Caco-2 (cell line): ENCODE measurements at regions of chr2 and their contacts with region 1.

Region 1: DNA sequence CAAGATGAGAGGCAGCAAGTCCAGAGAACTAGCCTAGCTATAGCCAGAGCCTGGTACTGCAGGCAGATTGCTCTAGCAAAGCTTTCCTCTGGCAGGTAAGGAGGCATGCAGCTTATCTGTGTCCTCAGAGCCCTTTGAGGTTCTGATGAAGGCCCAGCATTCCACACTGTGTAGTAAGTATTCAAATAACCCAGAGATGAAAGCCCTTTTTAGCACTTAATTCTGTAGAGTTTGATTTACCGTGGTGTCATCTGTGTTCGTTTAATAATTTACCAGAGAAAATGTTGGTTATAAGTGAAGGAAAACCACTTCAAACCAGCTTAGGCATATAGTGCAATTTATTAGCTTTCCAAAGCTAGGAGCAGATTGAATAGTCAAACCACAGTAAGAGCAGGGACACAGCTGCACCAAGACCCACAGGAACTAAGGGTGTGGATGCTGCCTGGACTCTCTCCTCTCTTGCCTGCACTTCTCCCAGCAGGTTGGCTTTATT is 226.6 kb downstream of the BABAM2 start:
- DNase-seq: peak; percentile 87 to 94
- H3K4me3 ChIP-seq: peak overlapping the region; percentile 29
- H3K4me3 Mint-ChIP-seq: peak overlapping the region; percentile 76
- H3K27ac Mint-ChIP-seq: peak overlapping the region; percentile 90
- H3K4me1 ChIP-seq: peaks cover 44% of the 10 kb centered on the region
- H3K4me1 Mint-ChIP-seq: peaks cover 40% of the 10 kb centered on the region
- H3K27me3 ChIP-seq: no peaks in the 10 kb centered on the region
- H3K27me3 Mint-ChIP-seq: no peaks in the 10 kb centered on the region
- CTCF ChIP-seq: peak in 1 of 2 experiments; percentile 3

Region 2: GRCh38 chr2:27765621-27766269 is 351.4 kb before region 1 on chr2:
- CTCF ChIA-PET with region 1: no interaction called
- POLR2A ChIA-PET with region 1: no interaction called
- intact Hi-C with region 1: loop called (anchors 5 kb)
- DNase-seq: peak; percentile 95 to 96
- H3K4me3 ChIP-seq: peak overlapping the region; percentile 22
- H3K4me3 Mint-ChIP-seq: peak overlapping the region; percentile 85
- H3K27ac Mint-ChIP-seq: peak overlapping the region; percentile 98
- H3K4me1 ChIP-seq: peaks cover 59% of the 10 kb centered on the region
- H3K4me1 Mint-ChIP-seq: peaks cover 27% of the 10 kb centered on the region
- H3K27me3 ChIP-seq: no peaks in the 10 kb centered on the region
- H3K27me3 Mint-ChIP-seq: no peaks in the 10 kb centered on the region
- CTCF ChIP-seq: no peak

Region 3: DNA sequence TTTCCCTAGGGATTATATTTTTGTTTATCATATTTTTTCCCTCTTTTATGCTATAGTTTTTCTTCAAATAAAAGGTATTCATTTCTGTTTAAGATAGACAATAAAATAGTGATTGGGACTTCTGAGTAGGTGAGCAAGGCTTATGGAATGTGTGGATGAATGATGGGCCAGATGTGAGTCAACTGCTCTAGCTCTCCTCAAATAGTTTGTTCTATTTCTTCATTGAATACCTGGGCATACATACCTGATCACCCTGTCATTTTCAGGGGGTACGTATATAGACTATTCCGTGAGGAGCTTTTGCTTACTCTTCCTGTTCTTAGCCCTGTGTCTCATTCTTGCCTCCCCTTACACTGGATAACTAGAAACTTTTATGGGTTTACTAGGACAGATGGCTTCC is 184.8 kb before region 1 on chr2:
- CTCF ChIA-PET with region 1: no interaction called
- POLR2A ChIA-PET with region 1: interaction called, 3 read pairs
- intact Hi-C with region 1: loop called (anchors 5 kb)
- DNase-seq: peak in 1 of 2 experiments; percentile 31
- H3K4me3 ChIP-seq: no peak overlapping the region
- H3K4me3 Mint-ChIP-seq: peak overlapping the region; percentile 11
- H3K27ac Mint-ChIP-seq: peak overlapping the region; percentile 43
- H3K4me1 ChIP-seq: peaks cover 40% of the 10 kb centered on the region
- H3K4me1 Mint-ChIP-seq: peaks cover 21% of the 10 kb centered on the region
- H3K27me3 ChIP-seq: no peaks in the 10 kb centered on the region
- H3K27me3 Mint-ChIP-seq: no peaks in the 10 kb centered on the region
- CTCF ChIP-seq: no peak

Region 4: DNA sequence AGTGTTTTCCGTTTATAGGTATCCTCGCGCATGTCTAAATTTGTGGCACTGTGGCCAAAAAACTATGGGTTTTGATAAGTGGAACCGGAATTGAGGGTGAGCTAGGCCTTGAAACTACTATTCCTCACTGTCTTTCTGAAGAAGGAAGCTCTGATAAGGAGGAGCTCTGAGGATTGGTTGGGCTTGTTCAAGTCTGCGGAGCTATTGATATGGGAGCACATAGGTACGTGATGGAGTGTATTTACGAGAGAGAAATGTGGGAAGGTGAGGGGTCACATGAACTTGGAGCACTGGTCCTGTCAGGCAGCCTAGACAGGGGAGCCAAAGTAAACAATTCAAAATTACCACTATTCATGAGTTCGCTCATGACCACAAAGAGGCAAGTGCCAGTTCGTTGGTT is 95.3 kb before region 1 on chr2:
- CTCF ChIA-PET with region 1: no interaction called
- POLR2A ChIA-PET with region 1: no interaction called
- intact Hi-C with region 1: no loop called
- DNase-seq: no peak
- H3K4me3 ChIP-seq: no peak overlapping the region
- H3K4me3 Mint-ChIP-seq: no peak overlapping the region
- H3K27ac Mint-ChIP-seq: no peak overlapping the region
- H3K4me1 ChIP-seq: no peaks in the 10 kb centered on the region
- H3K4me1 Mint-ChIP-seq: no peaks in the 10 kb centered on the region
- H3K27me3 ChIP-seq: no peaks in the 10 kb centered on the region
- H3K27me3 Mint-ChIP-seq: no peaks in the 10 kb centered on the region
- CTCF ChIP-seq: no peak

Region 5: GRCh38 chr2:28068088-28068487 is 49.1 kb before region 1 on chr2:
- CTCF ChIA-PET with region 1: no interaction called
- POLR2A ChIA-PET with region 1: no interaction called
- intact Hi-C with region 1: loop called (anchors 1 kb)
- DNase-seq: peak in 1 of 2 experiments; percentile 37
- H3K4me3 ChIP-seq: no peak overlapping the region
- H3K4me3 Mint-ChIP-seq: no peak overlapping the region
- H3K27ac Mint-ChIP-seq: no peak overlapping the region
- H3K4me1 ChIP-seq: peaks cover 19% of the 10 kb centered on the region
- H3K4me1 Mint-ChIP-seq: peaks cover 7% of the 10 kb centered on the region
- H3K27me3 ChIP-seq: no peaks in the 10 kb centered on the region
- H3K27me3 Mint-ChIP-seq: no peaks in the 10 kb centered on the region
- CTCF ChIP-seq: no peak

Region 6: GRCh38 chr2:28155627-28156026 is 38.5 kb after region 1 on chr2:
- CTCF ChIA-PET with region 1: interaction called, 6 read pairs
- POLR2A ChIA-PET with region 1: no interaction called
- intact Hi-C with region 1: loop called (anchors 2 kb)
- DNase-seq: peak in 1 of 2 experiments; percentile 63
- H3K4me3 ChIP-seq: no peak overlapping the region
- H3K4me3 Mint-ChIP-seq: peak overlapping the region; percentile 18
- H3K27ac Mint-ChIP-seq: peak overlapping the region; percentile 87
- H3K4me1 ChIP-seq: peaks cover 28% of the 10 kb centered on the region
- H3K4me1 Mint-ChIP-seq: peaks cover 24% of the 10 kb centered on the region
- H3K27me3 ChIP-seq: no peaks in the 10 kb centered on the region
- H3K27me3 Mint-ChIP-seq: no peaks in the 10 kb centered on the region
- CTCF ChIP-seq: peak; percentile 82 to 84

Region 7: DNA sequence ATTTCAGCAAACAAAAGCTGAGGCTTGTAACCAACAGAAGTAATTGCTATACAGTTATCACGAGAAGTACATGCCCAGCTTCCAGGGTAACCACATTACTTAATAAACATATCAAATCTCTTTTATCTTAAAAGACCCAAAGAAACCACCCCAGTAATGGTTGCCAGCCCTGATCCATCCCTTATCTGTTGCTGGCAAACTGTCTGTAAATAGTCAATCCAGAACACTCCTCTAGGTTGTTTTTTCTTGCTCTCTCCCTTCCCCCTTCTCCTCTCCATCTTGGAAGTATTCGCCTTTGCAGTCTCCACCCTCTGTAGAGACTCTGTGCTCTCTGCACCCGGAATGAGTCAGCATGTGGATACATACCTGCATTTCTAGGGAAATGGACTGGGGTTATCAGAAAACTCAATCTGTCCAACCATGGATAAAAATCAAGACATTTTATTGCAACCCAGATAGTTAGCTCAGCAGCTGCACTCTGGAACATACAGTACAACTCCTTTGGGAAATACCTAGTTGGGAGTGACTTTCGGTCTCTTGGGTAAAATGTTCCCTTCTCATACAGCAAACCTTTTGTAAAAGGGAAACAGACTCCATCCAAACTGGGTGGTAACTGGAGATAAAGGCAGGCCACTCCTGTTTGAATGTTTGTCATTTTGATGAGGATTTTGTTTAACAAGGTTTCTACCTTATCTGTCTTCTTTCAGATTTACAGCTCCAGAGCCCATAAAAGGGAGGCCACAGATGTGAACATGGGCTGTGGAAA is 152.1 kb after region 1 on chr2:
- CTCF ChIA-PET with region 1: interaction called, 6 read pairs
- POLR2A ChIA-PET with region 1: interaction called, 8 read pairs
- intact Hi-C with region 1: loop called (anchors 1 kb)
- DNase-seq: peak; percentile 89 to 95
- H3K4me3 ChIP-seq: no peak overlapping the region
- H3K4me3 Mint-ChIP-seq: peak overlapping the region; percentile 72
- H3K27ac Mint-ChIP-seq: peak overlapping the region; percentile 94
- H3K4me1 ChIP-seq: peaks cover 59% of the 10 kb centered on the region
- H3K4me1 Mint-ChIP-seq: peaks cover 60% of the 10 kb centered on the region
- H3K27me3 ChIP-seq: no peaks in the 10 kb centered on the region
- H3K27me3 Mint-ChIP-seq: no peaks in the 10 kb centered on the region
- CTCF ChIP-seq: no peak